Activated naive CD4-positive, alpha-beta T cell treated with anti-CD3 and anti-CD28 coated beads for 36 hours (primary cell): ENCODE measurements at regions of chr16 and their contacts with region 1.

Region 1: GRCh38 chr16:53130159-53131049 is 75.6 kb downstream of the CHD9 start:
- DNase-seq: peak; percentile 85
- H3K4me3 Mint-ChIP-seq: peak overlapping the region; percentile 70
- H3K27ac Mint-ChIP-seq: no peak overlapping the region
- H3K4me1 Mint-ChIP-seq: peaks cover 6% of the 10 kb centered on the region
- H3K27me3 Mint-ChIP-seq: no peaks in the 10 kb centered on the region

Region 2: GRCh38 chr16:53054670-53055485 is 75.5 kb before region 1 on chr16 and contains the start of gene CHD9:
- CTCF ChIA-PET with region 1: interaction called, 13 read pairs
- intact Hi-C with region 1: loop called (anchors 1 kb)
- DNase-seq: peak; percentile 72
- H3K4me3 Mint-ChIP-seq: peak within 1 kb of the TSS; percentile 80
- H3K27ac Mint-ChIP-seq: no peak within 1 kb of the TSS
- H3K4me1 Mint-ChIP-seq: peaks cover 18% of the 10 kb centered on the region
- H3K27me3 Mint-ChIP-seq: peaks cover 3% of the 10 kb centered on the region
- total RNA-seq, gene CHD9: 9.4 to 9.7 TPM

Region 3: GRCh38 chr16:53159781-53160436 is 29.5 kb after region 1 on chr16:
- CTCF ChIA-PET with region 1: no interaction called
- intact Hi-C with region 1: loop called (anchors 1 kb)
- DNase-seq: no peak
- H3K4me3 Mint-ChIP-seq: no peak overlapping the region
- H3K27ac Mint-ChIP-seq: no peak overlapping the region
- H3K4me1 Mint-ChIP-seq: no peaks in the 10 kb centered on the region
- H3K27me3 Mint-ChIP-seq: no peaks in the 10 kb centered on the region

Region 4: DNA sequence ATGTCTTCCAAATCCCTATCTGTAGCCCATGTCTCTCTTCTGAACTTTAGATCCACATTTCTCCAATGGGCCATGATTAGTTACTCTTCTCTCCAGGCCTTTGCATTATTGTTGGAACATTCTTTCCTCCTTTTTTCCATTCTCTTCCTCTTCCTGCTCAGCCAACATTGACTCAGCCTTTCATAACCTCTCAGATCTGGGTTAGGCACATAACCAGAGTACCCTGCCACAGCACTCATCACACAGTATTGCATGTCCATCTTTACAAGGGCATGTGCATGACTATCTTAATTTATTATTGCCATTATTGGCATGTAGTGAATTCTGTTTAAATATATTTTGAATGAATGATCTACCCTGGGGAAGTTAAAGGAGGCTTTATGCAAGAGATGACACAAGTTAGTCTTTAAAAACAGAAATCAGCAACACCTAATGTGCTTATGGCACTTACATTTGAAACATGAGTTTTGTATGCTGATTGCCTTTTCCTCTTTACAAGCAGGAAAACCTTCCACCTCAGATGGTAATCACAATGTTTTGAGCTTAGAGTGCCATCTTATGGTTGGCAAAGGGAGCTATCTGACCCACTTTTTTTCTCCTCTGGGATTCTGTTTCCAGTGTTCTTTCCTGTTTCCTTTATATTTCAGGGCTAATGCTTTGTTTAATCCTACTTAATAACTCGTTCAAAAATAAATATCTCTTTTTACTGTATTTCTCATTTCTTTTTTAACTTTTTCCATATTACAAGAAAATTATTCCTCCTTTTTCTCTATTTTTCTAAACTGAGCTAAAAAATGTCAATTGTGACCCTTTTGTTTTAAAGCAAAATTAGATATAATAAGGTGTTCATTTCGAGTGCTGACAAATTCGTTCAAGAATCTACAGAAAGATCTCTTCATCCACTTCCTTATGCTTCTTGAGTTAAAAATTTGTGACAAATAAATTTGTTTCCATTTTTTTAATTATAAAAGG is 152.9 kb after region 1 on chr16:
- CTCF ChIA-PET with region 1: no interaction called
- intact Hi-C with region 1: loop called (anchors 1 kb)
- DNase-seq: no peak
- H3K4me3 Mint-ChIP-seq: no peak overlapping the region
- H3K27ac Mint-ChIP-seq: no peak overlapping the region
- H3K4me1 Mint-ChIP-seq: no peaks in the 10 kb centered on the region
- H3K27me3 Mint-ChIP-seq: no peaks in the 10 kb centered on the region

Region 5: GRCh38 chr16:53309457-53309856 is 179.1 kb after region 1 on chr16:
- CTCF ChIA-PET with region 1: no interaction called
- intact Hi-C with region 1: no loop called
- DNase-seq: no peak
- H3K4me3 Mint-ChIP-seq: no peak overlapping the region
- H3K27ac Mint-ChIP-seq: no peak overlapping the region
- H3K4me1 Mint-ChIP-seq: no peaks in the 10 kb centered on the region
- H3K27me3 Mint-ChIP-seq: no peaks in the 10 kb centered on the region

Region 6: GRCh38 chr16:53435066-53435688 is 304.8 kb after region 1 on chr16:
- CTCF ChIA-PET with region 1: no interaction called
- intact Hi-C with region 1: loop called (anchors 2 kb)
- DNase-seq: peak; percentile 71
- H3K4me3 Mint-ChIP-seq: peak overlapping the region; percentile 96
- H3K27ac Mint-ChIP-seq: peak overlapping the region; percentile 93
- H3K4me1 Mint-ChIP-seq: peaks cover 36% of the 10 kb centered on the region
- H3K27me3 Mint-ChIP-seq: no peaks in the 10 kb centered on the region

Region 7: GRCh38 chr16:53469936-53470335 is 339.5 kb after region 1 on chr16:
- CTCF ChIA-PET with region 1: no interaction called
- intact Hi-C with region 1: no loop called
- DNase-seq: no peak
- H3K4me3 Mint-ChIP-seq: no peak overlapping the region
- H3K27ac Mint-ChIP-seq: no peak overlapping the region
- H3K4me1 Mint-ChIP-seq: peaks cover 23% of the 10 kb centered on the region
- H3K27me3 Mint-ChIP-seq: no peaks in the 10 kb centered on the region

Region 8: DNA sequence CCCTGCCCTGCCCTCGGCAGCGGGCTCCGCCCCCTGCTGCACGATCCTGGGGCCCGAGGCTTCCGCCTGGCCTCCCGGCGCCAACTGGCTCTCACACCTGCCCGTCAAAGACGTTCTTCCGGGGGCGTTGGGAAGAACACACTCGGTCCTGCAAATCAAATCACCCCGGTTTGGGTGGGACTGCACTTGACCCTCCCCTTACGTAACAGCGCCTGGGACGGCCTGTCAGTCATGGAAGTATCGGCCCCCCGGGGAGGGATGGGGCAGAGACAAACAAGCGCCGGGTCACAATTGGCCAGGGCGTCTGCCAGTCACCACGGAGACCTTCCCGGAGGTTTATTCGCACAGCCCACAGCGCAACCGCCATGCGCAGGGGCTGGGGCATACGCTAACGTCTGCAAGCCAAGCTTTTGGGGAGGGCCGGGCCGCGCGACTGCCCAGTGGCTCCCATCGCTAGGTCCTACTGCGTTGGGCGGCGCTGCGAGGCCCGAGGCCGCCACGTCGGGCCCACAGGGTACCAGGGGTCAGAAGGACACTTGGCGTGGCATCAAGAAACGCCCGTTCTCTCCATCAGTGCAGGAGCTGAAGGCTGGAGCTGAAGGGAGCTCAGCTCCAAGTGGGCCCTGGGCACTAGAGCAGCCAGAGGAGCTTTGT is 373.0 kb after region 1 on chr16:
- CTCF ChIA-PET with region 1: interaction called, 4 read pairs
- intact Hi-C with region 1: loop called (anchors 1 kb)
- DNase-seq: peak; percentile 100
- H3K4me3 Mint-ChIP-seq: peak overlapping the region; percentile 95
- H3K27ac Mint-ChIP-seq: peak overlapping the region; percentile 93
- H3K4me1 Mint-ChIP-seq: peaks cover 54% of the 10 kb centered on the region
- H3K27me3 Mint-ChIP-seq: no peaks in the 10 kb centered on the region

Region 9: DNA sequence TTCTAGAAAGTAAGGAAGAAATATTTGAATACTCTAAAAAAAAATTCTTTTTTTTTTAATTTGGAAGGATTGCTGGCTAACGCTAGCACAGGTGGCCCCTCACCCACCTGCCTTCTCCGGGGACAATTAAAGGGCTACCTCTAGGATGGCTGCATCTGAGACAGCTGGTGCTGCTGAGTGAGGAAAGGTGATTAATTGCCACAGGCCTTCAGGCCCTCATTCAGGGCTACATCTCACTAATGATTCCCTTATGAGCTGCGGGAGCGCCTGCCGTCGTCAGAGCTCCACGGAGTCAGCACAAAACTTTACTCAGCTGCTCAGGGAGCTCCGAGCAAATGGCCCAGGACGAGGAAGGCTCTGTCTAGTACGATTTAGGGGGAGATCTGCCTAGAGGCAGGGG is 399.6 kb after region 1 on chr16:
- CTCF ChIA-PET with region 1: no interaction called
- intact Hi-C with region 1: loop called (anchors 1 kb)
- DNase-seq: no peak
- H3K4me3 Mint-ChIP-seq: no peak overlapping the region
- H3K27ac Mint-ChIP-seq: no peak overlapping the region
- H3K4me1 Mint-ChIP-seq: peaks cover 12% of the 10 kb centered on the region
- H3K27me3 Mint-ChIP-seq: no peaks in the 10 kb centered on the region